Activated B cell treated with CpG ODN at 0.5 μM for 24 hours (primary cell): ENCODE measurements at regions of chr15 and their contacts with region 1.

Region 1: GRCh38 chr15:50633653-50634052 is 52.9 kb downstream of the TRPM7 start:
- DNase-seq: no peak
- ATAC-seq: no peak
- H3K4me3 Mint-ChIP-seq: no peak overlapping the region
- H3K27ac Mint-ChIP-seq: no peak overlapping the region
- H3K4me1 Mint-ChIP-seq: no peaks in the 10 kb centered on the region
- H3K27me3 Mint-ChIP-seq: no peaks in the 10 kb centered on the region
- CTCF ChIP-seq: no peak

Region 2: GRCh38 chr15:50590288-50590687 is 43.4 kb before region 1 on chr15:
- CTCF ChIA-PET with region 1: no interaction called
- POLR2A ChIA-PET with region 1: no interaction called
- intact Hi-C with region 1: loop called (anchors 5 kb)
- DNase-seq: no peak
- ATAC-seq: no peak
- H3K4me3 Mint-ChIP-seq: no peak overlapping the region
- H3K27ac Mint-ChIP-seq: no peak overlapping the region
- H3K4me1 Mint-ChIP-seq: no peaks in the 10 kb centered on the region
- H3K27me3 Mint-ChIP-seq: no peaks in the 10 kb centered on the region
- CTCF ChIP-seq: no peak

Region 3: DNA sequence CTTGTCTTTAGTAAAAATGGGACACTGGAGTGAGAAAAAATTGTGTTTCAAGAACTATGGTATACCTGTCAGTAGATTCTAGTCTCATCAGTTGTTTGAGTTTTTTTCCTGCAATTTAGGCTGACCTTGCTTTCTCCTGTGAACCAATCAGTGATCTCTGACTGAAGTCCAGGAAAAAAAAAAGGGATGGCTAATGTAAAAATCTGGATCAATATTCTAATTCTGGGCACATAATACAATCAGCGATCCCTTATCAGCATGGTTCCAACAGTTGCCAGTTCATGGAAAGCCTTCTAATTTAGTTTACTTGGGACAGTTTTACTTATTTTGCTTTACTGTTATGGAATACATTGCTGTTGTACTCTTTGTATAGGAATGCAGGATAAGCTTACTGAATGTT is 36.0 kb after region 1 on chr15:
- CTCF ChIA-PET with region 1: no interaction called
- POLR2A ChIA-PET with region 1: no interaction called
- intact Hi-C with region 1: loop called (anchors 5 kb)
- DNase-seq: no peak
- ATAC-seq: no peak
- H3K4me3 Mint-ChIP-seq: no peak overlapping the region
- H3K27ac Mint-ChIP-seq: no peak overlapping the region
- H3K4me1 Mint-ChIP-seq: no peaks in the 10 kb centered on the region
- H3K27me3 Mint-ChIP-seq: no peaks in the 10 kb centered on the region
- CTCF ChIP-seq: no peak

Region 4: GRCh38 chr15:50681467-50681866 is 47.8 kb after region 1 on chr15:
- CTCF ChIA-PET with region 1: no interaction called
- POLR2A ChIA-PET with region 1: no interaction called
- intact Hi-C with region 1: no loop called
- DNase-seq: no peak
- ATAC-seq: no peak
- H3K4me3 Mint-ChIP-seq: no peak overlapping the region
- H3K27ac Mint-ChIP-seq: no peak overlapping the region
- H3K4me1 Mint-ChIP-seq: peaks cover 65% of the 10 kb centered on the region
- H3K27me3 Mint-ChIP-seq: no peaks in the 10 kb centered on the region
- CTCF ChIP-seq: no peak